Activated naive CD4-positive, alpha-beta T cell treated with anti-CD3 and anti-CD28 coated beads, Interleukin-2, amount 10 ng/mL, durations not matched to agents 7 days and 5 days (primary cell): ENCODE measurements at regions of chr18 and their contacts with region 1.

Region 1: DNA sequence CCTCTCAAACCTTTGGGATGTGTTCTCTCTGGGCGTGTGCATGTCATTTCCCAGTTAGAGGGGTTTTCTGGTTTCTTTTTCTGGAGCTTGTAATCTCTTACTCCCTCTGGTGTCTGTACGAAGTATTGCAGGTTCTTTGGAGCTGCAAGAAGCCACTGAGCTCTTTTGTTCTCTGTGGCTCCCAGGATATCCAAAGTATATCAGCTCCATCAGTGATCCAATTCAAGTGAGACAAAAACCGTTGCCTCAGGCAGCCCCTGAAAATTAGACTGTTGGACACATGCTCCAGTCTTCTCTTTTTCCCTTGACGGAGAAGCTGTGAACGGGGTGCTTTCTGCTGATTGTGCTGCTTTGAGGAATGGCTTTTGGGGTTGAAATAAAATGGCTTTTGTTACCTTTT is 59.0 kb upstream of the LDLRAD4 start:
- DNase-seq: peak; percentile 33
- H3K4me3 Mint-ChIP-seq: no peak overlapping the region
- H3K27ac Mint-ChIP-seq: no peak overlapping the region
- H3K4me1 Mint-ChIP-seq: peaks cover 2% of the 10 kb centered on the region
- H3K27me3 Mint-ChIP-seq: peaks cover 18% of the 10 kb centered on the region

Region 2: GRCh38 chr18:13124411-13124810 is 35.2 kb before region 1 on chr18:
- CTCF ChIA-PET with region 1: interaction called, 12 read pairs
- DNase-seq: no peak
- H3K4me3 Mint-ChIP-seq: no peak overlapping the region
- H3K27ac Mint-ChIP-seq: no peak overlapping the region
- H3K4me1 Mint-ChIP-seq: peaks cover 4% of the 10 kb centered on the region
- H3K27me3 Mint-ChIP-seq: no peaks in the 10 kb centered on the region

Region 3: GRCh38 chr18:13139885-13140450 is 19.6 kb before region 1 on chr18:
- CTCF ChIA-PET with region 1: interaction called, 10 read pairs
- DNase-seq: no peak
- H3K4me3 Mint-ChIP-seq: no peak overlapping the region
- H3K27ac Mint-ChIP-seq: no peak overlapping the region
- H3K4me1 Mint-ChIP-seq: peaks cover 28% of the 10 kb centered on the region
- H3K27me3 Mint-ChIP-seq: peaks cover 44% of the 10 kb centered on the region

Region 4: DNA sequence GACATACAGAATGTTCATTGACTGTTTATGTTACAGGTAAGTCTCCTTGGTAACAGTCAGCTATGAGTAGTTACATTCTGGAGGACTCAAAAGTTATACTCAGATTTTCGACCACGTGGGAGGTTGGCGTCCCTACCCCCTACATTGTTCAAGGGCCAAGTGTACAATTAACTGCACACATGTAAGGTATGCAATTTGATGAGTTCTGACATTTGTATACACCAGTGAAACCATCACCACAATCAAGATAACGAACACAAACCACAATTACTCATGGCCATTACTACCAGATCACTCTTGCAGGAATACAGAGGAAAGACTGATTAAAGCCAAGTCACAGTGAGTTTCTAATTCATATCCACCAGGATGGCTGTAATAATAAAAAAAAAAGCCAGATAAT is 19.4 kb after region 1 on chr18:
- CTCF ChIA-PET with region 1: interaction called, 10 read pairs
- DNase-seq: no peak
- H3K4me3 Mint-ChIP-seq: no peak overlapping the region
- H3K27ac Mint-ChIP-seq: no peak overlapping the region
- H3K4me1 Mint-ChIP-seq: peaks cover 2% of the 10 kb centered on the region
- H3K27me3 Mint-ChIP-seq: peaks cover 14% of the 10 kb centered on the region

Region 5: DNA sequence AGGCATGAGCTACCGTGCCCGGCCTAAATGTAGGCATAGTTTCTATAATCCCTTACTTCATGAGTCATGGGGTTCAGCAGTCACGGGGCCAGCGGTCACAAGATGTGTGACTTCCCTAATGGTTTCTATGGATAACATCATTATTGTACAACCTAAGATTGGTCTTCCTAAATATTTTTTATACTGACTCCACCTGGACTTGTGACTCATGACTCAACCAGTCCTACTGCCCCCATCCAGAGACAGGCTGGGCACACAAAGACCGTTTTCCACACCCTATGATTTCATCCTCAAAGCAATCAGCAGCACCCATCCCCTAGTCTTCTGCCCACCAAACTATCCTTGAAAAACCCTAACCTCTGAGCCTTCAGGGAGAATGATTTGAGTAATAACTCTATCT is 550.9 kb after region 1 on chr18:
- CTCF ChIA-PET with region 1: no interaction called
- DNase-seq: no peak
- H3K4me3 Mint-ChIP-seq: no peak overlapping the region
- H3K27ac Mint-ChIP-seq: no peak overlapping the region
- H3K4me1 Mint-ChIP-seq: no peaks in the 10 kb centered on the region
- H3K27me3 Mint-ChIP-seq: no peaks in the 10 kb centered on the region